Aorta (tissue), 5 donors: ENCODE measurements at regions of chr12 and their contacts with region 1.

Region 1: GRCh38 chr12:71652656-71653055 is 11.0 kb downstream of the ZFC3H1 start:
- DNase-seq: no peak
- ATAC-seq: no peak
- H3K4me3 ChIP-seq: no peak overlapping the region
- H3K27ac ChIP-seq: no peak overlapping the region
- H3K4me1 ChIP-seq: no peaks in the 10 kb centered on the region
- H3K27me3 ChIP-seq: no peaks in the 10 kb centered on the region

Region 2: DNA sequence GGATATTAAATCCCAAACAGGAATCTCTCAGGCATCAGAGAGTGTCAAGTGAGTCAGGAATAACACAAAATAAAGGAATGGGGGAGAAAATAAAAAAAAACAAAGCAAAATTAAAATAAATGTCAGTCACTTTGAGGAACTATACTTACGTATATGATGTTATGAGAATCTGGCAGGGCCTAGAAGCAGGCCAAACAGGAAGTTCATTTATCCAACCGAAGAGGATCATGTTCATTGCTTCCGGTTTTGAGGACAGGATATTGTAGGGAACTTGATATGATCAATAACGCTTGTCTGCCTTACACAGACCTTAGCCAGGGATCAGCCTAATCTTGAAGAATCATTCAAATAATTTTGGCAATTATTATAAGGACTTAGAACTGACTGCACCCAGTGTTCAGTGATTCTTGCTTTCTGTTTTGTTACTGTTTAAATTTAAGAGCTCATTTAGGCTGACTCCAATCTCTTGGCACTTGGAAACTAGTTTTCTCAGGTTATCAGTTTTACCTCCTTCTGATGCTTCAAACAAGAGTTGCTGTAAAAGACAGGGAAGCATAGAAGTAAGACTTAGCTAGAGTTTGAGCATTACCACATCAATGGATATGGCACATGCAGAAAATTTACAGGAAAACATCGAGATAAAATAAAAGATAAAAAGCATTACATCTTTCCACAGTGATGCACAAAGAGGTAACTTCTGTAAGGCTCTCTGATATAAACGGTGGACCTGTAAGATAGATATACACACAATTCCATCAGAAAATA is 42.4 kb before region 1 on chr12:
- intact Hi-C with region 1: loop called in 1 of 2 experiments (anchors 5 kb)
- DNase-seq: no peak
- ATAC-seq: no peak
- H3K4me3 ChIP-seq: no peak overlapping the region
- H3K27ac ChIP-seq: no peak overlapping the region
- H3K4me1 ChIP-seq: no peaks in the 10 kb centered on the region
- H3K27me3 ChIP-seq: no peaks in the 10 kb centered on the region

Region 3: GRCh38 chr12:71671816-71672215 is 19.2 kb after region 1 on chr12:
- intact Hi-C with region 1: no loop called
- DNase-seq: no peak
- ATAC-seq: no peak
- H3K4me3 ChIP-seq: no peak overlapping the region
- H3K27ac ChIP-seq: no peak overlapping the region
- H3K4me1 ChIP-seq: no peaks in the 10 kb centered on the region
- H3K27me3 ChIP-seq: no peaks in the 10 kb centered on the region